ENCODE measurements at regions of chr6 and their contacts with region 1.

Region 1: DNA sequence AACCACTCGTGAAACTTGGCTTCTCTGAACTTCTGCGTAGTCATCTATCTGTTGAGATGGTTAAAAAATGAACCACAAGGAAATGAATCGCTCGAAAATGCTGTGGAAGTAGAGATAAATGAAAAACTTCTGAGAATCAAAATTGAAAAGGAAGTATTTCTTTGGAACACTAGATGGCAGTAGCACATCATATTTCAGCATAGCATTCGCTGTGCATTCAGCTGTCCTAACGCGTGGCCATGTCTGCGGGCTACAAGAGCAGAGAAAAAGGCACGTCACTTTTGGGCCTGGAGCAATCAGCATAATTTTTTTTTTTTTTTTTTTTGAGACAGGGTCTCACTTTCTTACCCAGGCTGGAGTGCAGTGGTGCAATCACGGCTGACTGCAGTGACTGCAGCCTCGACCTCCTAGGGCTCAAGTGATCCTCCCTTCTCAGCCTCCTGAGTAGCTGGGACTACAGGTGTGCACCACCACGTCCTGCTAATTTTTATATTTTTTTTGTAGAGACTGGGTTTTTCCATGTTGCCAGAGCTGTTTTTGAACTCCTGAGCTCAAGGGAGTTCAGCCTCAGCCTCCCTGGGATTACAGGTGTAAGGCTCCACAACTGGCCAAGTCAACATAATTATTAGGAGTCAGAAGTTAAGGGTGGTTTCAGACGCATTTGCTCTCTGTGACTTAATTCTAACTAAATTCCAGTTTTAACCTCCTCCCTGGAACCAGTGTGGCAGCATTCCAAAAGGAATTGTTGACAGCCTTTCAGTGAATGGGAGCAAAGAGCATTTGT is 8.8 kb upstream of the PERP start:
- DNase-seq: peak in 7 of 9 donors; percentile 39 to 68 (median 57)
- ATAC-seq: peak; percentile 94
- H3K4me3 ChIP-seq: no peak overlapping the region
- H3K4me3 Mint-ChIP-seq: no peak overlapping the region
- H3K27ac ChIP-seq: no peak overlapping the region
- H3K27ac Mint-ChIP-seq: no peak overlapping the region
- H3K4me1 ChIP-seq: peaks cover 0 to 4% of the 10 kb centered on the region in 2 donors
- H3K4me1 Mint-ChIP-seq: peaks cover 5 to 10% (median 7%) of the 10 kb centered on the region in 7 donors
- H3K27me3 ChIP-seq: no peaks in the 10 kb centered on the region
- H3K27me3 Mint-ChIP-seq: peaks cover 21 to 49% (median 30%) of the 10 kb centered on the region in 5 donors

Region 2: GRCh38 chr6:137816133-137816579 is 299.9 kb before region 1 on chr6:
- CTCF ChIA-PET with region 1: no interaction called
- POLR2A ChIA-PET with region 1: no interaction called
- intact Hi-C with region 1: no loop called
- DNase-seq: no peak
- ATAC-seq: peak; percentile 3
- H3K4me3 ChIP-seq: no peak overlapping the region
- H3K4me3 Mint-ChIP-seq: peak overlapping the region in 6 of 10 donors; percentile 1 to 82 (median 32)
- H3K27ac ChIP-seq: peak overlapping the region; percentile 37
- H3K27ac Mint-ChIP-seq: peak overlapping the region; percentile 30 to 95 (median 80)
- H3K4me1 ChIP-seq: peaks cover 21 to 36% of the 10 kb centered on the region in 2 donors
- H3K4me1 Mint-ChIP-seq: peaks cover 43 to 65% (median 62%) of the 10 kb centered on the region in 7 donors
- H3K27me3 ChIP-seq: no peaks in the 10 kb centered on the region
- H3K27me3 Mint-ChIP-seq: no peaks in the 10 kb centered on the region

Region 3: DNA sequence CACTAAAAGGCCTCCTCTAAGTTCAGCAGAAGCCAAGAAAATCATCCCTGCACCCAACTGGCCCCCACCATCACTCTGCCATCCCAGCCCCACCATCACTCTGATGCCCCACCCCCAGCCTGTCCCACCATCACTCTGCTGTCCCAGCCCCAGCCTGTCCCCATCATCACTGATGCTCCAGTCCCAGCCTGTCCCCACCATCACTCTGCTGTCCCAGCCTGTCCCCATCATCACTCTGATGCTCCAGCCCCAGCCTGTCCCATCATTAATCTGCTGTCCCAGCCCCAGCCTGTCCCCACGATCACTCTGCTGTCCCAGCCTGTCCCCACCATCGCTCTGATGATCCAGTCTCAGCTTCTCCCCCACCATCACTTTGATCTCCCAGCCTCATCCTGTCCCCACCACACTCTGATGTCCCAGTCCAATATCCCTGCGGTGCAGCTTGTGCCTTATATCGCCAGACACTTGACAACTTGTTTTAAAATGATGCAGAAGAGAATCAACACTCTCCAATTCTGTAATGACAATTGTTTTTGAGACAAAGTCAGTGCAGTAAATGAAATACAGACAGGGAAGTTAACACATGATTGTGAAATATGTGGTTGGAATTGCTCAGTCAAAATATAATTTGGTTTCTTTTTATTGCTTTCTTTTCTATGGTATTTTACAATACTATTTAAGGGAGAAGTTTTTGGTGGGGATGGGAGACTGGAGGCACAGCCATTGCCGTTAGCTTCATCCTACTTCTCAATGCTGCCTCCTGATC is 148.2 kb before region 1 on chr6:
- CTCF ChIA-PET with region 1: no interaction called
- POLR2A ChIA-PET with region 1: no interaction called
- intact Hi-C with region 1: no loop called
- DNase-seq: no peak
- ATAC-seq: peak; percentile 54
- H3K4me3 ChIP-seq: no peak overlapping the region
- H3K4me3 Mint-ChIP-seq: peak overlapping the region in 1 of 10 donors; percentile 38
- H3K27ac ChIP-seq: no peak overlapping the region
- H3K27ac Mint-ChIP-seq: peak overlapping the region in 3 of 9 donors; percentile 3 to 56 (median 51)
- H3K4me1 ChIP-seq: peaks cover 7 to 11% of the 10 kb centered on the region in 2 donors
- H3K4me1 Mint-ChIP-seq: peaks cover 16 to 54% (median 18%) of the 10 kb centered on the region in 7 donors
- H3K27me3 ChIP-seq: no peaks in the 10 kb centered on the region
- H3K27me3 Mint-ChIP-seq: no peaks in the 10 kb centered on the region

Region 4: DNA sequence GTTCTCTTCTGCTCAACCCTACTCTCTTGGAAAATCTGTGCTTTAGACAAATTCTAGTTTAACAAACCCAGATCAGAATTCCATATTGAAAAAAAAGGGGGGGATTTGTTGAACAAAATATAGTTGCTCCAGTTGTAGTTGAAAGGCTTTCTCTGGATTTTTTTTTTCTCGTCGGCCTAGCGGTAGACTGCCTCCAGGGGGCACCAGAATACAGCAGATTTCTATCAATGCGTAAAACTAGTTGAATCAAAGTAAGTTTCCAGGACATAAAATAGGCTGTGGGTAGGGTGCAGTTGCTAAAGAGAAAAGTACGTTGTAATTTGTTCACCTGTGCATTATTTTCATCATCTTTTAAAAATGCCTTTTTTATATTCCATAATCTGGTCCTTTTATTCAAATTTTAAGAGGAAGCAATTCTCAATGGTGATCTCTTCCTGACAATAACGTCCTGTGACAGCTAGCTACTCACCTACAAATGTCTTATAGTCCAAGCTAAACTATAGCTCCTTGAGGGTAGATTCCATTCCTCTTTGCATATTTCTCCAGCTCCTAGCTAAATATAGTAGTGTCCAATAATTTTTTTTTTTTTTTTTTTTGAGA is 114.2 kb before region 1 on chr6:
- CTCF ChIA-PET with region 1: interaction called, 13 read pairs
- POLR2A ChIA-PET with region 1: no interaction called
- intact Hi-C with region 1: no loop called
- DNase-seq: peak in 8 of 9 donors; percentile 37 to 65 (median 56)
- ATAC-seq: peak; percentile 79
- H3K4me3 ChIP-seq: no peak overlapping the region
- H3K4me3 Mint-ChIP-seq: no peak overlapping the region
- H3K27ac ChIP-seq: no peak overlapping the region
- H3K27ac Mint-ChIP-seq: peak overlapping the region in 1 of 9 donors; percentile 27
- H3K4me1 ChIP-seq: no peaks in the 10 kb centered on the region
- H3K4me1 Mint-ChIP-seq: peaks cover 0 to 16% (median 5%) of the 10 kb centered on the region in 7 donors
- H3K27me3 ChIP-seq: no peaks in the 10 kb centered on the region
- H3K27me3 Mint-ChIP-seq: peaks cover 0 to 11% (median 0%) of the 10 kb centered on the region in 5 donors

Region 5: GRCh38 chr6:138287144-138287955 is 171.3 kb after region 1 on chr6:
- CTCF ChIA-PET with region 1: interaction called, 10 read pairs
- POLR2A ChIA-PET with region 1: no interaction called
- intact Hi-C with region 1: loop called (anchors 1 kb)
- DNase-seq: peak in 8 of 9 donors; percentile 15 to 43 (median 26)
- ATAC-seq: peak; percentile 44
- H3K4me3 ChIP-seq: no peak overlapping the region
- H3K4me3 Mint-ChIP-seq: no peak overlapping the region
- H3K27ac ChIP-seq: no peak overlapping the region
- H3K27ac Mint-ChIP-seq: no peak overlapping the region
- H3K4me1 ChIP-seq: no peaks in the 10 kb centered on the region
- H3K4me1 Mint-ChIP-seq: no peaks in the 10 kb centered on the region
- H3K27me3 ChIP-seq: no peaks in the 10 kb centered on the region
- H3K27me3 Mint-ChIP-seq: peaks cover 0 to 4% (median 0%) of the 10 kb centered on the region in 5 donors

Region 6: GRCh38 chr6:138509371-138509770 is 393.3 kb after region 1 on chr6:
- CTCF ChIA-PET with region 1: interaction called, 39 read pairs
- POLR2A ChIA-PET with region 1: no interaction called
- intact Hi-C with region 1: loop called (anchors 1 to 2 kb)
- DNase-seq: peak in 8 of 9 donors; percentile 5 to 52 (median 31)
- ATAC-seq: peak; percentile 52
- H3K4me3 ChIP-seq: no peak overlapping the region
- H3K4me3 Mint-ChIP-seq: no peak overlapping the region
- H3K27ac ChIP-seq: no peak overlapping the region
- H3K27ac Mint-ChIP-seq: peak overlapping the region in 1 of 9 donors; percentile 6
- H3K4me1 ChIP-seq: peaks cover 0 to under 1% of the 10 kb centered on the region in 2 donors
- H3K4me1 Mint-ChIP-seq: peaks cover 0 to 5% (median 0%) of the 10 kb centered on the region in 7 donors
- H3K27me3 ChIP-seq: no peaks in the 10 kb centered on the region
- H3K27me3 Mint-ChIP-seq: peaks cover 0 to 23% (median 4%) of the 10 kb centered on the region in 5 donors

Region 7: DNA sequence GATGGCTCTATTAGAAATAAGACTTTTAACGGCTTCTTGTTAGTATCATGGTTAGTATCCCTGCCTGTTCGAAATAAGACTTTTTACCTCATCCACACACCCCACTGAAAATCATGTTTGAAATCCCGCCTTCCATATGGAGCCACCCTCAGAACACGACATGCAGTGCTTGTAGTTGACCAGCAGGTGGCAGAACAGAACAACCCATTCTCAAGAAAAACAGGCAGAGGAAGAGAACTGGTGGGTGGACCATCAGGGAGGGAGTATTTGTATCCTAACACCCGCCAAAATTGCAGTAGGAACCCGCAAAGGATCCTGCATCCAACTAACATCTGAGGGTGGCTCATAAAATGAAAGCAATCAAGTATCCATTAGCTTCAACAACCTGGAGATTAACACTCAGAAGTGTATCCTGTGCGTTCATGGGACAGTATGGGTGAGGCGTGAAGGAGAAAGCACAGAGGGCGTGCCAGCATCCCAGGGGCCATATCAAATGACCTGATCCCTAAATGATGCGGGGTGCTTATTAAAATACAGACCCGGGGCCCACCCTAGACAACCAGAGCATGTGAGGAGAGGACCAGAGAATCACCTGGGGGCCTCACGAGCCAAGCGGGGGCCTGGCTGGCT is 472.9 kb after region 1 on chr6:
- CTCF ChIA-PET with region 1: interaction called, 11 read pairs
- POLR2A ChIA-PET with region 1: interaction called, 3 read pairs
- intact Hi-C with region 1: loop called (anchors 1 to 5 kb)
- DNase-seq: peak in 8 of 9 donors; percentile 14 to 60 (median 46)
- ATAC-seq: peak; percentile 69
- H3K4me3 ChIP-seq: no peak overlapping the region
- H3K4me3 Mint-ChIP-seq: no peak overlapping the region
- H3K27ac ChIP-seq: no peak overlapping the region
- H3K27ac Mint-ChIP-seq: no peak overlapping the region
- H3K4me1 ChIP-seq: peaks cover 0 to 11% of the 10 kb centered on the region in 2 donors
- H3K4me1 Mint-ChIP-seq: peaks cover 12 to 29% (median 17%) of the 10 kb centered on the region in 7 donors
- H3K27me3 ChIP-seq: no peaks in the 10 kb centered on the region
- H3K27me3 Mint-ChIP-seq: peaks cover 0 to 3% (median 0%) of the 10 kb centered on the region in 5 donors

Region 8: DNA sequence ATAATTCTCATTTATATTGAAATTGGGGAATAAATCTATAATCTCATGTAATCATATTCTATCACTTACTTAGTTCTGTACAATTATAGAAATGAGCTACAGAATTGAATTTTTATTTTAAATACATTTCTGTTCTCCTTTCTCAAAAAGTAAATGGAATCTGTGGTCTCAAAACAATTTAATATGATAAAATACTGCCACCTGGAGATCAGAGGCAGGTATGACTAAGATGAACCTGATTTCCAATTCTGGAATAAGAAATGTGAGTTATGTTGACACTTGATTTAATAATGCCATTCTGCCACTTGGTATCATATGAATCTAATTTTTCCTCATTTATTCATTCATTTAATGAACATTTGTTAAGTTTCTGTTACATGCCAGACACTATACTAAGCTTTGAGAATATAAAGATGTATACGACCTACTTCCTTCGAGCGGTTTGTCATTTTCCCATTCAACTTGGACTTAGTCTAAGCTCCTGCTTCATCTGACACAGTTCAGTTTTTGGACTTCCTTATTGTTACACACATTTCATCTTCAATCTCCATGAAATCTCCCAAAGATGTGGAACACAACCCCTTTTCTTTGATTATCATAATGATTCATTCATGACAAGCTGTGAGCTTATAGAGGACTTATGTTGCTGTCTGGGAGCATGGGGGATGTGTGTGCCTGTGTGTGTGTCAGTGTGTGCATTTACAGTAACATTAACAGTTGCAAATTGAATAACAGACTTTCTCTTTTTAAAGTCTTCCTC is 650.0 kb after region 1 on chr6:
- CTCF ChIA-PET with region 1: interaction called, 11 read pairs
- POLR2A ChIA-PET with region 1: no interaction called
- intact Hi-C with region 1: loop called (anchors 1 kb)
- DNase-seq: peak in 5 of 9 donors; percentile 25 to 42 (median 29)
- ATAC-seq: no peak
- H3K4me3 ChIP-seq: no peak overlapping the region
- H3K4me3 Mint-ChIP-seq: no peak overlapping the region
- H3K27ac ChIP-seq: no peak overlapping the region
- H3K27ac Mint-ChIP-seq: peak overlapping the region in 1 of 9 donors; percentile 26
- H3K4me1 ChIP-seq: no peaks in the 10 kb centered on the region
- H3K4me1 Mint-ChIP-seq: peaks cover 0 to 5% (median 0%) of the 10 kb centered on the region in 7 donors
- H3K27me3 ChIP-seq: no peaks in the 10 kb centered on the region
- H3K27me3 Mint-ChIP-seq: no peaks in the 10 kb centered on the region

Measured in naive thymus-derived CD4-positive, alpha-beta T cell (primary cell).